Activated B cell treated with CpG ODN at 0.5 μM for 24 hours (primary cell): ENCODE measurements at regions of chr9 and their contacts with region 1.

Region 1: DNA sequence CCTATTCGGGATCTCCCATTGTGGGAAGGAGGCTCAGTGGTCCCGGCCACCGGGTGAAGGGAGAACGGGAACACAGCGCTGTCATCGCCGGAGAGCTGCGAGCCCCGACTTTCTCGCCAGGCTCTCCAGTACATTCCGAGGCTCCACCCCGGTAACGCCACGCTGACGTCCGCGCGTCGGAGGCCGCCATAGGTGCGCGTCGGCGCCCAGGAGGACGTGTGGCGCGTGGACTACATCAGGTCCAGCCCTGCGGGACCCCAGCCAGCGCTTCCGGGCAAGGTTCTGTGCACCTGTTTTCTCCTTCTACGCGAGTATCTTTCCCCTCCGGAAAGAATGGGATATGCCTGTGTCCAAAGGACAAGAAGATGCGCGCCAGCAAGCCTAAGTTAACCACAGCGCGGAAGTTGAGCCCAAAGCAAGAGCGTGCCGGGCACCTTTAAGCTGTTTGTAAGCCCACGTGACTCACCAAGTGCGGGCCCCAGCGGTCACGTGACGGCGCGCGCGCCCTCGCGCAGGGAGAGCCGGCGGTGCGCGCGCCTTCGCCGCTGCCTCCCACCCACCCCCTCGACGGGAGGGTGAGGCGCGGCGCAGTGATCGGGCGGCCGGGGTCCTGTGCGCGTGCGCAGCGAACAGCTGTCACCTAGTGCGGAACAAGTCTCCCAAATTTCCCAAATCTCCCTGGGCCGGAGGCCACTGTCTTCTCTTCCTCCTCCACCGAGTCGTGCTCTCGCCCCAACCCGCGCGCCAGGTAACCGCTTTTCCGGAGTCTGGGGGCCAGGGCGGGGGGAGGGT is at the start of gene KDM4C:
- DNase-seq: peak; percentile 92
- ATAC-seq: peak; percentile 75
- H3K4me3 Mint-ChIP-seq: peak within 1 kb of the TSS; percentile 99
- H3K27ac Mint-ChIP-seq: peak within 1 kb of the TSS; percentile 100
- H3K4me1 Mint-ChIP-seq: peaks cover 39% of the 10 kb centered on the region
- H3K27me3 Mint-ChIP-seq: no peaks in the 10 kb centered on the region
- CTCF ChIP-seq: no peak
- total RNA-seq, gene KDM4C: 90.7 and 113 TPM in 2 replicates

Region 2: DNA sequence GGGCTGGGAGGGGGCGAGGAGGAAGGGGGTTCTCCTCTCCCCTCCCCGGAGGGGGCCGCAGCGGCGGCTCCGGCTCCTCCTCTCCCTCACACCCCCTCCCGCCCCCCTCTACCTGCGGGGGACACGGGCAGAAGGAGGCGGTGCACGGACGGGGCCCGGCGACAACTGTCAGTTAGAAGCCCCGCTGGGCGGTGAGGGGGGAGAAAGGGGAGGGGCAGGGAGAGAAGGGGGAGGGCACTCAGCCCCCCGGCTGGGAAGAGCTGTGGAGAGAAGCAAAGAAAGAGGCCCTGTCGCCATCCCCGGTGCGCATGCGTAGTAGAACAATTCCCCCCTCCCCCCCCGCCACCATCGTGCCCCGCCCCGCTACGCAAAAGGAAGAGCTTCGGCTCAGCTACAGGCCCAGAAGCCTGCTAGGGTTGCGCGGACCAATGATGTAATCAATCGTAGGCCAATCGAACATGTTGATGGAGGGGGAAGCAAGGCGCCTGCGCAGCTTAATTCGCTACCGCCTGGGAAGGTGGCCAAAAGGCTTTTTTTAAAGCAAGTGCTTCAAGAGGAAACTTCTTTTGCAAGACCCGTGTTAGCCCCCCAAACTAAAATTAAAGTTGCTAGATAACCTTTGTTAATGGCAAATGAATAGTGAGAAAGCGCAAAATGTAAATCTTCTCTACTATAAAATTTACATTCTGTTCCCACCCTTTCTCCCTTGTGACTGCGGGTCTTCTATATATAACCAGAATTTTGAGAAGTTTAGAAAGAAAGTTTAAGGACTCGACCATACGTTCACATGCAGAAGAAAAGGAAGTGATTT is 749.3 kb before region 1 on chr9:
- CTCF ChIA-PET with region 1: no interaction called
- POLR2A ChIA-PET with region 1: interaction called, 25 read pairs
- intact Hi-C with region 1: loop called (anchors 1 kb)
- DNase-seq: peak; percentile 82
- ATAC-seq: peak; percentile 75
- H3K4me3 Mint-ChIP-seq: peak overlapping the region; percentile 85
- H3K27ac Mint-ChIP-seq: peak overlapping the region; percentile 87
- H3K4me1 Mint-ChIP-seq: peaks cover 57% of the 10 kb centered on the region
- H3K27me3 Mint-ChIP-seq: no peaks in the 10 kb centered on the region
- CTCF ChIP-seq: no peak

Region 3: DNA sequence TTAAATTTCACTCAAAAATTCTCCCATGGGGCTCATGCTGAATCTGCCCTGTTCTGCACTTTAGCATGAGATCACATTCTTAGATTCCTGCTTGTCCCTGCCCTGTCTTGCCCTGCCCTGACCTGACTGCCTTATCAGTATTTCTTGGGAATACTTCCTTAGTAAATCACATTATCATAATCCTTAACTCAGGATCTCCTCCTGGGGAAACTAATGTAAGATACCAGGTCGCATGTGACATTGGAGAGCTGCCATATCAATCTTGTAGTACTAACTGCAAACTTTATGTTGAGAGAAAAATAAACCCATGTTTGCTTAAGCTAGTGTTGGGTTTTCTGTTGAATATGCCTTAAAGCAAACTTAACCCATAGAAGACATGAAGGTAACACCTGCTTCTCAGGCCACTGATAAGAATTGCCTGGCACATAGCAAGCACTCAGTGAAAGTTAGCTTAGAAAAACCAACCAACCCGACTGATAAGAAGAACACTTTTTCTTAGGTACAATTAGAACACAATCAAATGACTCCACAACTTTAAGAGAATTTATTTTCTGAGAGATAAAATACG is 488.7 kb before region 1 on chr9:
- CTCF ChIA-PET with region 1: no interaction called
- POLR2A ChIA-PET with region 1: no interaction called
- intact Hi-C with region 1: no loop called
- DNase-seq: no peak
- ATAC-seq: no peak
- H3K4me3 Mint-ChIP-seq: no peak overlapping the region
- H3K27ac Mint-ChIP-seq: no peak overlapping the region
- H3K4me1 Mint-ChIP-seq: no peaks in the 10 kb centered on the region
- H3K27me3 Mint-ChIP-seq: peaks cover 18% of the 10 kb centered on the region
- CTCF ChIP-seq: no peak

Region 4: DNA sequence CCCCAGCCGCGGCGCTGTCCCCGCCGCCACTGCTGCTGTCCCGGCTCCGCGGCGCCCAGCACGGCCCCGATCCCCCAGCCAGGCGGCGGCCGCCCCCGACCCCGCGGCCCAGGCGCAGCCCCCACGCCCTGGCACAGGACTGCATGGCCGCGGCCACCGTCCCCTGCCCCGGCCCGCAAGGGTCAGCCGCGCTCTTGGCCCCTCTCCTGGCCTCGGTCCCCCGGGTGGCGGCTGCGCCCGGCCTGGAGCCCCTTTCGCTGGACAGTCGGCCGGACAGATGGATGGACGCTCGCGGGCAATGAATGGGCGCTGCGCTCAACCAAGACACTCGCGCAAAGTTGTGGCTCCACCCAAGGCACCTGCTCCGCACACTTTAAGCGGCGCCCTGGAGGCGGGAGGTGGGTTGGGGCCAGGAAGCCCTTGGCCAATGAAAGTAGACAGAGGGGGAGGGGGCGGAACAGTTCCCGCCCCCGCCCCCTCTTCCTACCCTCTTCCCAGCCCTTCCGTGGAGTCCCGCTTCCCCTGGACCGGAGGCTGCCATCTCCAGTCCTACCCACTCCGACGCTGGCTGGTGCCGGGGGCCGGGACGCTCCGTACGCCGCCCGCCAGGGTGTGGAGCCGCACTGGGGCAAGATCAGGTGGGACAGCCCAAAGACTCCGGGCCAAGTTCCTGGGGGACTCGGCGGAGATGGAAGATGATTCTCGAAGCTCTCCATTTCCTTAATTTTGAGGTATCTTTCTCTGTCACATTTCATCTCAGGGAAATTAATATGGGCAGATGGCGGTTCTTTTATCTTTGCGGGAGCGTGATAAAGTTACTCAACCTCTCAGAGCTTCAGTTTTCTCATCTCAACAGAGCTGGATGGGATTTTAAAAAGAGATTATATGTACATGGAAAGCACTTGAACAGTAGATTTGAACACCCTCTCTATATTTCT is 112.0 kb before region 1 on chr9 and contains the start of gene GLDC:
- CTCF ChIA-PET with region 1: no interaction called
- POLR2A ChIA-PET with region 1: interaction called, 11 read pairs
- intact Hi-C with region 1: no loop called
- DNase-seq: peak; percentile 39
- ATAC-seq: peak; percentile 86
- H3K4me3 Mint-ChIP-seq: peak within 1 kb of the TSS; percentile 80
- H3K27ac Mint-ChIP-seq: no peak within 1 kb of the TSS
- H3K4me1 Mint-ChIP-seq: peaks cover 19% of the 10 kb centered on the region
- H3K27me3 Mint-ChIP-seq: peaks cover 32% of the 10 kb centered on the region
- CTCF ChIP-seq: no peak
- total RNA-seq, gene GLDC: 2.3 and 2.6 TPM in 2 replicates

Region 5: DNA sequence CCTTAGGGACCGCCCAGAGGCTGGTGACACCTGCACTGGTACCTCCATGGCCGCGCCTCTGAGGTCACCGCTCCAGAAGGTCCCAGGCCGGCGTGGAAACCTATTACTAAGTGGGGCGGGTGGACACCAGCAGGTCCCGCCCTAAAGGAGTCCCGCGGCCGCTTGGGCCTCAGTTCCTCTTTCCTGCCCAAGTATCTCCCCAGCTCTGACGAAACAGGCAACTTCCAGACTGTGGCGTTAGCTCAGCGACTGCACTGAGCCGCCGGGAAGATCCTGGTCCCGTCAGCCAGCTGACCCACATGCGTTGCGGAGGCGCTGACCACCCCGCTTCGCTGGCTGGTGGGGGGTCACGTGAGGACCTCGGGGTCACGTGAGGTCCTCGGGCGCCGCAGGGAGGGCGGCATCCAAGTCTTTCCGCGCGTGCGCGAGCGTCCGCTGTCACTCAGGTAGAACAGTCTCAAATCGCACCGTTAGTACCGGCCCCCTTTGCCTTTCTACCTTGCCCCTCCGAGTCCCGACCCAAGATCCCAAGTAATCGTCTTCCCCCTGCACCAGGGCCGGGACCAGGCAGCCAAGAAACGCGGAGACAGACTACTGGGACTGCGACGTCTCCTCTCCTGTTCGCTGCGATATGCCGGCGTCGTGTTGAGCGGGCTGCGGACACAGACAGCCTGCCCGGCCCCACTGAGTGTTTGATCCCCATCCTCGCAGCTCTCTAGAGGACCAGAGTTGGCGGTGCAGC is 53.6 kb before region 1 on chr9:
- CTCF ChIA-PET with region 1: interaction called, 3 read pairs
- POLR2A ChIA-PET with region 1: interaction called, 42 read pairs
- intact Hi-C with region 1: loop called (anchors 1 kb)
- DNase-seq: peak; percentile 71
- ATAC-seq: peak; percentile 84
- H3K4me3 Mint-ChIP-seq: peak overlapping the region; percentile 93
- H3K27ac Mint-ChIP-seq: peak overlapping the region; percentile 98
- H3K4me1 Mint-ChIP-seq: peaks cover 22% of the 10 kb centered on the region
- H3K27me3 Mint-ChIP-seq: no peaks in the 10 kb centered on the region
- CTCF ChIP-seq: no peak

Region 6: DNA sequence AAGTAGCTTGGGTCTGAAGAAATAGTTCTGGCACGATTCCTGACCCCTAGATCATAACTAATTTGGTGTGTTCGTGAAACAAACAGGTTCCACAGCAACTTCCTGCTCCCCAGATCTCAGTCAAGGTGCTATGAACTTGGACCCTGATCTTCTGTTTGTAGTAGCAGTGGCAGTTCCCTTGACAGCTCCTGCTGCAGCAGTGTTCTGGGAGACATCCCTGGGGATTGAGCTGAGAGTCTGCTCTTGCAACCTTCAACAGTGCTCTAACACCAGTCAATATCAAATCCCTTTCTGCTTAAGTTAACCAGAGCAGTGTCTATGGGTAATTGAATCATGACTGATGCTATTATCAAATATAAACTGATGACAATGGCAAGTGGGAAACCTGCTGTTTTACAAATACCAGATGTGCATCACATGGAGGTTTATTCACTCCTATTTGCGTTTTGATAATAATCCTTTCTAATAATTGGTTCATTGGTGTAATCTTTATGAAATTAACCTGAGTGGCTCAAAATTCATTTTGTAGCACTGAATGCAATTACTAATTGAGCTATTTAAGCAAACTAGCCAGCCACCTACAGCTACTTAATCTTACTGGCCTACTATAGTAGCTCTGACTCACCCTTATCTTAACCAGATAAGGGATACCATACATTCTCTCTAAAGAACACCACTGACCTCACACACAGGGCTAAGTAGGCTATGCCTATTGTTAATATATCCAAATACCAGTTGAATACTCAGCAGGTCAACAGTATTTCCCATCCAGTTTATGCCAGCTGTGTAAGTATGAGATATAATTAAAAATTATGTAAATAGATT is 22.0 kb after region 1 on chr9:
- CTCF ChIA-PET with region 1: interaction called, 3 read pairs
- POLR2A ChIA-PET with region 1: interaction called, 49 read pairs
- intact Hi-C with region 1: no loop called
- DNase-seq: no peak
- ATAC-seq: peak; percentile 29
- H3K4me3 Mint-ChIP-seq: peak overlapping the region; percentile 44
- H3K27ac Mint-ChIP-seq: peak overlapping the region; percentile 63
- H3K4me1 Mint-ChIP-seq: peaks cover 94% of the 10 kb centered on the region
- H3K27me3 Mint-ChIP-seq: no peaks in the 10 kb centered on the region
- CTCF ChIP-seq: no peak

Region 7: GRCh38 chr9:6987381-6987780 is 229.7 kb after region 1 on chr9:
- CTCF ChIA-PET with region 1: no interaction called
- POLR2A ChIA-PET with region 1: interaction called, 12 read pairs
- intact Hi-C with region 1: no loop called
- DNase-seq: no peak
- ATAC-seq: no peak
- H3K4me3 Mint-ChIP-seq: no peak overlapping the region
- H3K27ac Mint-ChIP-seq: no peak overlapping the region
- H3K4me1 Mint-ChIP-seq: no peaks in the 10 kb centered on the region
- H3K27me3 Mint-ChIP-seq: no peaks in the 10 kb centered on the region
- CTCF ChIP-seq: no peak